ENCODE measurements at regions of chr11 and their contacts with region 1.

Region 1: DNA sequence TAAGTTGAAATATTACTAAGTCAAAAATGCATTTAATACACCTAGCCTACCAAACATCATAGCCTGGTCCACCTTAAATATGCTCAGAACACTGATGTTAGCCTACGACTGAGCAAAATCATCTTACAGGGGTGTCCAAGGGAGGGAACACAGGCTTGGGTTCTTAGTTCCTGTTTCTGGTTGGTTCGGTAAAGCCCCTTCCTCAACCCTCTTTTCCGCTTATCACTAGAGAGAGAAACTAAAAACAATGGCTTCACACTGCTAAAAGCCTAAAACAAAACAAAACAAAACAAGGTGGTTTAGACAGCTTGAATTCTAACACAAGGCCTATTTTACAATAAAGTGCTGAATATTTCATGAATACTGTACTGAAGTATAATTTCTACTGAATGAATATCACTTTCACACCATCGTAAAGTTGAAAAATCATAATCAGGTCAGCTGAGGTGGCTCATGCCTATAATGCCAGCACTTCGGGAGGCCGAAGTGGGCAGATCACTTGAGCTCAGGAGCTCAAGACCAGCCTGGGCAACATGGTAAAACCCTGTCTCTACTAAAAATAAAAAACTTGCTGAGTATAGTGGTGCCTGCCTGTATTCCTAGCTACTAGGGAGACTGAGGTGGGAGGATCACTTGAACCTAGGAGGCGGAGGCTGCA is 118.0 kb downstream of the SIK3 start:
- H3K4me3 Mint-ChIP-seq: peak overlapping the region; percentile 14
- H3K27ac Mint-ChIP-seq: peak overlapping the region; percentile 76
- H3K4me1 Mint-ChIP-seq: peaks cover 52% of the 10 kb centered on the region
- H3K27me3 Mint-ChIP-seq: no peaks in the 10 kb centered on the region

Region 2: GRCh38 chr11:117098269-117099232 is 118.3 kb after region 1 on chr11 and contains the start of gene SIK3:
- intact Hi-C with region 1: loop called (anchors 5 kb)
- H3K4me3 Mint-ChIP-seq: peak within 1 kb of the TSS; percentile 91
- H3K27ac Mint-ChIP-seq: peak within 1 kb of the TSS; percentile 100
- H3K4me1 Mint-ChIP-seq: peaks cover 41% of the 10 kb centered on the region
- H3K27me3 Mint-ChIP-seq: no peaks in the 10 kb centered on the region